Endothelial cell of umbilical vein (primary cell): ENCODE measurements at regions of chr17 and their contacts with region 1.

Region 1: DNA sequence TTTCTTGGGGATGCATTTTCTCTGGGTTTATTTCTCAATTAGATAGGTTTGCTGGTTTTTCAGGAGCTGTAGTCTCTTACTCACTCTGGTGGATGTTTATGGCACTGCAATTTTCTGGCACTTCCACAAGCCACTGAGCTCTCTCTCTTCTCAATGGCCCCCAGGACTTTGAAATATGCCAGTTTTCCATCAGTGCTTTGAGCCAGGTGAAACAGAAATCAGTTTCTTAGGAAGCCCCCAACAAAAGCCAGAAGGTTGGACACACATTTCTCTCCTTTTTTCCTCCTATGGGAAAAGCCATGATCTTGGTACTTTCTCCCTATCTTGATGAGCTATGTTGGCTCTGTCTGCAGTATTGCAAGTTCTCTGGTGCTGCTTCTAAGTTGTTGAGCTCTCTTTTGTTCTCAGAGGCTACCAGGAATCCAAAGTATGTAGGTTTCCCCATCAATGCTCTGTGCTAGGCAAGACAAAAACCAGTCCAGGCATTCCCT is 90.7 kb upstream of the SMIM36 start:
- DNase-seq: peak; percentile 69
- H3K4me3 ChIP-seq: no peak overlapping the region
- H3K27ac ChIP-seq: no peak overlapping the region
- H3K4me1 ChIP-seq: no peaks in the 10 kb centered on the region
- H3K27me3 ChIP-seq: peaks cover 0 to 3% of the 10 kb centered on the region in 2 experiments
- CTCF ChIP-seq: peak; percentile 71 to 72
- POLR2A ChIP-seq: no peak

Region 2: GRCh38 chr17:55492781-55493341 is 109.1 kb before region 1 on chr17:
- CTCF ChIA-PET with region 1: no interaction called
- POLR2A ChIA-PET with region 1: no interaction called
- dilution Hi-C with region 1: no loop called
- intact Hi-C with region 1: no loop called
- DNase-seq: no peak
- H3K4me3 ChIP-seq: no peak overlapping the region
- H3K27ac ChIP-seq: no peak overlapping the region
- H3K4me1 ChIP-seq: no peaks in the 10 kb centered on the region
- H3K27me3 ChIP-seq: no peaks in the 10 kb centered on the region
- CTCF ChIP-seq: no peak
- POLR2A ChIP-seq: no peak

Region 3: GRCh38 chr17:55527540-55528118 is 74.3 kb before region 1 on chr17:
- CTCF ChIA-PET with region 1: interaction called, 357 read pairs
- POLR2A ChIA-PET with region 1: no interaction called
- dilution Hi-C with region 1: no loop called
- intact Hi-C with region 1: loop called (anchors 1 kb)
- DNase-seq: peak; percentile 71
- H3K4me3 ChIP-seq: no peak overlapping the region
- H3K27ac ChIP-seq: no peak overlapping the region
- H3K4me1 ChIP-seq: no peaks in the 10 kb centered on the region
- H3K27me3 ChIP-seq: peaks cover 0 to 3% of the 10 kb centered on the region in 2 experiments
- CTCF ChIP-seq: peak; percentile 48 to 69
- POLR2A ChIP-seq: no peak

Region 4: GRCh38 chr17:55549140-55549539 is 52.8 kb before region 1 on chr17:
- CTCF ChIA-PET with region 1: interaction called, 15 read pairs
- POLR2A ChIA-PET with region 1: no interaction called
- dilution Hi-C with region 1: no loop called
- intact Hi-C with region 1: no loop called
- DNase-seq: no peak
- H3K4me3 ChIP-seq: no peak overlapping the region
- H3K27ac ChIP-seq: no peak overlapping the region
- H3K4me1 ChIP-seq: peaks cover 3% of the 10 kb centered on the region
- H3K27me3 ChIP-seq: no peaks in the 10 kb centered on the region
- CTCF ChIP-seq: no peak
- POLR2A ChIP-seq: no peak

Region 5: DNA sequence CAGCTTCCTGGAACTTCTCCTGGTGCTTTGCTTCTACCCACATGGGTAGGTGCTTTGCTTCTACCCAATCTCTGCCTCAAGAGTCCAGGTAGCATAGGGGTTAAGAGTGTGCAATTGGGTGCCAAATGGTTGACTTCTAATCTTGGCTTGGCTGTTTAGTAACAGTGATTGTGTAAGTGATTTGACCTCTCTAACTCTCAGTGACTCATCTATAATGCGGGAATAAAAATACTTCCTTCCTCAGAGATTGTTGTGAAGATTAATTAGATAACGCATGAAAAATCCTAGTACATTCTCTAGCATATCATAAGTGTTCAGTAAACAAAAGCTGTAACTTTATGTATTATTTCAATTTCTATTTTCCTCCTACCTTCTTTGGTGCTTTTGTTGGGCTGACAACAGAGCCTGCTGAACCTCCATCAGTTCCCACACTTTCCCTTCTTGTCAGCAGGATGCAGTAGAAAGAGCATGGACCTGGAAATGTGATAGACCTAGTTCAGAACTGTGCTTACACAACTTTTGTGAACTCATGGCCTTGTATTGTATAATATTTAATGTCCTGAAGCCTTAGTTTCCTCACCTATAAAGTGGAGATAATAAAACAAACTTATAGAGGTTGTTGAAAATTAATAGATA is 17.8 kb before region 1 on chr17:
- CTCF ChIA-PET with region 1: interaction called, 32 read pairs
- POLR2A ChIA-PET with region 1: no interaction called
- dilution Hi-C with region 1: no loop called
- intact Hi-C with region 1: loop called (anchors 2 kb)
- DNase-seq: peak; percentile 71
- H3K4me3 ChIP-seq: no peak overlapping the region
- H3K27ac ChIP-seq: no peak overlapping the region
- H3K4me1 ChIP-seq: peaks cover 9% of the 10 kb centered on the region
- H3K27me3 ChIP-seq: peaks cover 0 to 2% of the 10 kb centered on the region in 2 experiments
- CTCF ChIP-seq: no peak
- POLR2A ChIP-seq: no peak

Region 6: GRCh38 chr17:55641676-55642081 is 39.8 kb after region 1 on chr17:
- CTCF ChIA-PET with region 1: interaction called, 54 read pairs
- POLR2A ChIA-PET with region 1: no interaction called
- dilution Hi-C with region 1: no loop called
- intact Hi-C with region 1: loop called (anchors 1 kb)
- DNase-seq: peak; percentile 77
- H3K4me3 ChIP-seq: no peak overlapping the region
- H3K27ac ChIP-seq: no peak overlapping the region
- H3K4me1 ChIP-seq: no peaks in the 10 kb centered on the region
- H3K27me3 ChIP-seq: peaks cover 0 to 3% of the 10 kb centered on the region in 2 experiments
- CTCF ChIP-seq: peak; percentile 56 to 80
- POLR2A ChIP-seq: no peak

Region 7: GRCh38 chr17:55750750-55751657 is 149.1 kb after region 1 on chr17 and contains the start of gene PCTP:
- CTCF ChIA-PET with region 1: interaction called, 12 read pairs
- POLR2A ChIA-PET with region 1: no interaction called
- dilution Hi-C with region 1: no loop called
- intact Hi-C with region 1: no loop called
- DNase-seq: peak; percentile 88
- H3K4me3 ChIP-seq: peak within 1 kb of the TSS; percentile 55 to 75 (median 69)
- H3K27ac ChIP-seq: peak within 1 kb of the TSS; percentile 47
- H3K4me1 ChIP-seq: peaks cover 5% of the 10 kb centered on the region
- H3K27me3 ChIP-seq: no peaks in the 10 kb centered on the region
- CTCF ChIP-seq: peak; percentile 37 to 72
- POLR2A ChIP-seq: peak; percentile 36
- total RNA-seq, gene PCTP: 13.5 and 14.5 TPM in 2 replicates